Activated CD8-positive, alpha-beta T cell treated with anti-CD3 and anti-CD28 coated beads for 36 hours (primary cell): ENCODE measurements at regions of chr1 and their contacts with region 1.

Region 1: GRCh38 chr1:171801487-171801891 is 20.0 kb downstream of the METTL13 start:
- DNase-seq: peak; percentile 14
- ATAC-seq: peak; percentile 55
- H3K4me3 Mint-ChIP-seq: no peak overlapping the region
- H3K27ac Mint-ChIP-seq: no peak overlapping the region
- H3K4me1 Mint-ChIP-seq: peaks cover 4% of the 10 kb centered on the region
- H3K27me3 Mint-ChIP-seq: no peaks in the 10 kb centered on the region
- CTCF ChIP-seq: peak; percentile 68

Region 2: DNA sequence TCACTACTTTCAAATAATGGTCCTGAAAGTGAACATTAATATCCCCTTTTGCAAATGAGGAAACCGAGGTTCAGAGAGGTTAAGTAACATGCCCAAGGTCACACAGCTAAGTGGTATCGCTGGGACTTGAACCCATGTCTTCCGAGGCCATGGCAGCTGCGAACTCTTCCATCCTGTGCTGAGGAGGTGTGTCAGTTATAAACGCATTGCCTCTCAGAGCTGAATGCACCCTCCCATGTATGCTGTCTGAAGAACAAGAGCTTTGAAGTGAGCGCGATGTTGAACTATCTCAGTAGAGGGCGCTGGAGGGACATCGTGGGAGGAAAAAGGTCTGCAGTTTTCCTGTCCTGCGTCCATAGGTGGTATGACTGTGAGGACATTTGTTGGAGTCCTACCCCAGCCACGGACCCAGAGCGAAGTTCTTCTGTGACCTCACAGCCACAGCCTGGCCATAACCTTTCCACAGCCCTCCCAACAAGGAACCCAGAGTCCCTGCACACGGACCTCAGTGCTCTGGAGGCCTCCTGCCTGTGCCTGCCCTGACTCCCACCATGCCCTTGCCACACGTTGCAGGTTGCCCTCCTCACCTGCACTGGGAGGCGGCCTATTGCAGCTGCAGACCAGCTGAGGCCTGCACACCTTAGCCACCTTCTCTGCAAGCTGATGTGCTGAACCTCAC is 156.5 kb before region 1 on chr1:
- CTCF ChIA-PET with region 1: interaction called, 13 read pairs
- POLR2A ChIA-PET with region 1: no interaction called
- intact Hi-C with region 1: no loop called
- DNase-seq: peak; percentile 87
- ATAC-seq: peak; percentile 98
- H3K4me3 Mint-ChIP-seq: no peak overlapping the region
- H3K27ac Mint-ChIP-seq: no peak overlapping the region
- H3K4me1 Mint-ChIP-seq: peaks cover 4% of the 10 kb centered on the region
- H3K27me3 Mint-ChIP-seq: no peaks in the 10 kb centered on the region
- CTCF ChIP-seq: peak; percentile 76

Region 3: DNA sequence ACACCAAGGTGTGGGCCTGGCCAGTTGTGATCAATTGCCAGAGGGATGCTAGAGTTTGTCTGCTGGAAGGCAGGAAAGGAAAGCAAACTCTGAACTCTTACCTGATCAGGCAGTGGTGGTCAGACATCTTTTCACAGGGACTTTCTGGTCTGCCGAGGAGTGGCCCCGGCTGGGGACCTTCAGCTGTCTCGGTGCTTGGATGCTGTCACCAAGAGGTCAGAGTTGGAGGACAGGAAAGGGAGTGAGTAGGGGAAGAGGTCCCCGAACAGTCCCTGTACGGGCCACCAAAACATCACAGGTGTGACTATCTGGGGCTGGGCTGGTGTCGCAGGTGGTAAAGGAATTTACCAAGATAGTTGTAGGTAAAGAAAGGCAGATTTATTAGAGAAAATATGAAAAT is 37.7 kb before region 1 on chr1:
- CTCF ChIA-PET with region 1: no interaction called
- POLR2A ChIA-PET with region 1: no interaction called
- intact Hi-C with region 1: no loop called
- DNase-seq: no peak
- ATAC-seq: no peak
- H3K4me3 Mint-ChIP-seq: no peak overlapping the region
- H3K27ac Mint-ChIP-seq: no peak overlapping the region
- H3K4me1 Mint-ChIP-seq: no peaks in the 10 kb centered on the region
- H3K27me3 Mint-ChIP-seq: peaks cover 4% of the 10 kb centered on the region
- CTCF ChIP-seq: no peak

Region 4: GRCh38 chr1:171781176-171781875 is 20.2 kb before region 1 on chr1 and contains the start of gene METTL13:
- CTCF ChIA-PET with region 1: interaction called, 32 read pairs
- POLR2A ChIA-PET with region 1: interaction called, 4 read pairs
- intact Hi-C with region 1: no loop called
- DNase-seq: peak; percentile 99
- ATAC-seq: peak; percentile 96
- H3K4me3 Mint-ChIP-seq: peak within 1 kb of the TSS; percentile 94
- H3K27ac Mint-ChIP-seq: peak within 1 kb of the TSS; percentile 95
- H3K4me1 Mint-ChIP-seq: peaks cover 45% of the 10 kb centered on the region
- H3K27me3 Mint-ChIP-seq: no peaks in the 10 kb centered on the region
- CTCF ChIP-seq: no peak
- total RNA-seq, gene METTL13: 44.6 to 46.6 TPM

Region 5: DNA sequence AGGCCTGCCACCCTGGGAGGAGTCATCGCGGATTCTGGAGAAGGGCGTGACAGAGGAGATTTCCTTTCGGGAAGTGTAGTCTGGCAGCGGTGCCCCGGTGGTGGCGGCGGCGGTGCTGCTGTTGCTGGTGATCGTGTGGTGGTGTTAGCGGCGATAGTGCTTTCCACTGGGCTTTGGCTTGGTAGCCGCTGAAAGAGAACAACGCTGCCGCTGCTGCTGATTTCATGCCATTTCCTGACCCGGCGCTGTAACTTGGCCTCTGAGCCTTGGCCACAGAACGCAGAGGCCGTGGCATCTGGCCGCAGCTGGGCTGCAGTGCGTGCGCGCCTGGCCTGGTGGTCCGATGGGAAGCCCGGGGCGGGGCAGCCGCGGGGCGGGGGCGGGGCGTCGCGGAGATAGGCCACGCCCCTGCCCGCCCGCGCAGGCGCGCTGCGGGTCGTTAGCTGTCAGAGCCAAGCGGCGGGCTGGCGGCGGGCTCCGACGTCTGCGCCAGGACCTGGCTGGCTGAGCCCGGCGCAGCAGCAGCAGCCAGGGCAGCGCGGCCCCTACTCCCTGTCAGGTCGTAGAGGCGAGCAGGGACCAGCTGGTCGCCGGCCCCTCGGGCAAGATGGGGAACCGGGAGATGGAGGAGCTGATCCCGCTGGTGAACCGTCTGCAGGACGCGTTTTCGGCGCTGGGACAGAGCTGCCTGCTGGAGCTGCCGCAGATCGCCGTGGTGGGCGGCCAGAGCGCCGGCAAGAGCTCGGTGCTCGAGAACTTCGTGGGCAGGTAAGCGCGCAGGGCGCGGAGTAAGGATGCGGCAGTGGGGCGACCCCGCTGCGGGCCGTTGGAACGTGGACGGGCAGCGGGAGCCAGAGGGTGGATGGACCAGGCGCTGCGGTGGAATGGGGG is 39.8 kb after region 1 on chr1 and contains the start of gene DNM3:
- CTCF ChIA-PET with region 1: interaction called, 10 read pairs
- POLR2A ChIA-PET with region 1: no interaction called
- intact Hi-C with region 1: no loop called
- DNase-seq: peak; percentile 76
- ATAC-seq: peak; percentile 98
- H3K4me3 Mint-ChIP-seq: peak within 1 kb of the TSS; percentile 81
- H3K27ac Mint-ChIP-seq: peak within 1 kb of the TSS; percentile 69
- H3K4me1 Mint-ChIP-seq: peaks cover 12% of the 10 kb centered on the region
- H3K27me3 Mint-ChIP-seq: peaks cover 21% of the 10 kb centered on the region
- CTCF ChIP-seq: no peak
- total RNA-seq, gene DNM3: 0.58 to 1.1 TPM

Region 6: GRCh38 chr1:171990371-171990770 is 188.9 kb after region 1 on chr1:
- CTCF ChIA-PET with region 1: interaction called, 137 read pairs
- POLR2A ChIA-PET with region 1: no interaction called
- intact Hi-C with region 1: loop called (anchors 2 kb)
- DNase-seq: no peak
- ATAC-seq: no peak
- H3K4me3 Mint-ChIP-seq: no peak overlapping the region
- H3K27ac Mint-ChIP-seq: no peak overlapping the region
- H3K4me1 Mint-ChIP-seq: no peaks in the 10 kb centered on the region
- H3K27me3 Mint-ChIP-seq: no peaks in the 10 kb centered on the region
- CTCF ChIP-seq: no peak